Activated T-helper 2 cell treated with anti-CD3 and anti-CD28 coated beads, Interferon-gamma antibody, Interleukin-2, Interleukin-4, amounts not matched to agents 10 μg/mL and 5 μg/mL and 100 μg/mL, durations not matched to agents 14 hours and 24 hours and 36 hours (primary cell): ENCODE measurements at regions of chr19 and their contacts with region 1.

Region 1: DNA sequence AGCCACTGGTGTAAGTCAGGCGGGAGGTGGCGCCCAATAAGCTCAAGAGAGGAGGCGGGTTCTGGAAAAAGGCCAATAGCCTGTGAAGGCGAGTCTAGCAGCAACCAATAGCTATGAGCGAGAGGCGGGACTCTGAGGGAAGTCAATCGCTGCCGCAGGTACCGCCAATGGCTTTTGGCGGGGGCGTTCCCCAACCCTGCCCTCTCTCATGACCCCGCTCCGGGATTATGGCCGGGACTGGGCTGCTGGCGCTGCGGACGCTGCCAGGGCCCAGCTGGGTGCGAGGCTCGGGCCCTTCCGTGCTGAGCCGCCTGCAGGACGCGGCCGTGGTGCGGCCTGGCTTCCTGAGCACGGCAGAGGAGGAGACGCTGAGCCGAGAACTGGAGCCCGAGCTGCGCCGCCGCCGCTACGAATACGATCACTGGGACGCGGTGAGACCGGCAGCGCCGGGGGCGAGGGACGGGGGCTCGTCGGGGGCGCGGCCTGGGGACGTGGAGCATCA is at the start of gene ALKBH7:
- DNase-seq: peak; percentile 95
- H3K4me3 Mint-ChIP-seq: peak within 1 kb of the TSS; percentile 87
- H3K27ac Mint-ChIP-seq: peak within 1 kb of the TSS; percentile 88
- H3K4me1 Mint-ChIP-seq: peaks cover 8% of the 10 kb centered on the region
- H3K27me3 Mint-ChIP-seq: no peaks in the 10 kb centered on the region
- total RNA-seq, gene ALKBH7: 33.0 and 35.9 TPM in 2 replicates

Region 2: DNA sequence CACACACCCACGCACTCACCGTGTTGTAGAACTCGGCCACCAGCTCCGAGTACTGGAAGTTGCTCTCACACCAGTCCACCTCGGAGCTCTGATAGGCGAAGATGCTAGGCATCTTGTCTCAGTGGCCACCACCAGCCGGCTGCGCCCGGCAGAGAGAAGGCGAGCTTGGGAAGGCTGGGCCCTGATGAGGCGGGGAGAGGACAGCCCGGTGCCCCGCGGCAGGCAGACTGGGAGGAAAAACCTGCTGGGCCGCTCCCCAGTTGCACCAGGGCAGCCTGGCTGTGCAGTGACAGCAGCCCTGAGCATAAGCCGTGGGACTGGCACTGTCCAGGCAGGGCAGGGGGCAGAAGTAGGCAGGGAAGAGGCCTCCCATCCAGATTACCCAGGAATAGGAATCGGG is 39.2 kb before region 1 on chr19 and contains the start of gene ACER1:
- intact Hi-C with region 1: no loop called
- DNase-seq: no peak
- H3K4me3 Mint-ChIP-seq: no peak within 1 kb of the TSS
- H3K27ac Mint-ChIP-seq: no peak within 1 kb of the TSS
- H3K4me1 Mint-ChIP-seq: no peaks in the 10 kb centered on the region
- H3K27me3 Mint-ChIP-seq: no peaks in the 10 kb centered on the region
- total RNA-seq, gene ACER1: 0.11 TPM in 2 replicates

Region 3: DNA sequence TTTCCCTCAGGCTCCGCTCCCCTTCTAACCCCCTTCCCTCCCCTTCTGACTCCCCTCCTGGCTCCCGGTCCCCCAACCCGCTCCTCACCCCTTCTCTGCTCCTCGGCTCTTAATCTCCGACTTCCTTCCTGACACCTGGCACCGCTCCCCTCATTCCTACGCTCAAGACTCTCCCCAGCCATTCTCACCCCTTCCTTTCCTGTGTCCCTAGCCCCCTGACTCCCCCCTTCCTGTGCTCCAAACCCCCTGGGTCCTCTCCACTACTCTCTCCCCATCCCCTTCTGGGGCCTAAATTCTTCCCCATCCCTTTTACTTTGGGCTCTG is 10.7 kb before region 1 on chr19:
- intact Hi-C with region 1: loop called (anchors 1 kb)
- DNase-seq: no peak
- H3K4me3 Mint-ChIP-seq: peak overlapping the region; percentile 98
- H3K27ac Mint-ChIP-seq: peak overlapping the region; percentile 98
- H3K4me1 Mint-ChIP-seq: peaks cover 11% of the 10 kb centered on the region
- H3K27me3 Mint-ChIP-seq: no peaks in the 10 kb centered on the region

Region 4: GRCh38 chr19:6393074-6393983 is 20.7 kb after region 1 on chr19 and contains the start of gene GTF2F1:
- intact Hi-C with region 1: loop called (anchors 1 kb)
- DNase-seq: peak; percentile 87
- H3K4me3 Mint-ChIP-seq: peak within 1 kb of the TSS; percentile 88
- H3K27ac Mint-ChIP-seq: peak within 1 kb of the TSS; percentile 95
- H3K4me1 Mint-ChIP-seq: peaks cover 22% of the 10 kb centered on the region
- H3K27me3 Mint-ChIP-seq: no peaks in the 10 kb centered on the region
- total RNA-seq, gene GTF2F1: 59.6 and 60.1 TPM in 2 replicates

Region 5: DNA sequence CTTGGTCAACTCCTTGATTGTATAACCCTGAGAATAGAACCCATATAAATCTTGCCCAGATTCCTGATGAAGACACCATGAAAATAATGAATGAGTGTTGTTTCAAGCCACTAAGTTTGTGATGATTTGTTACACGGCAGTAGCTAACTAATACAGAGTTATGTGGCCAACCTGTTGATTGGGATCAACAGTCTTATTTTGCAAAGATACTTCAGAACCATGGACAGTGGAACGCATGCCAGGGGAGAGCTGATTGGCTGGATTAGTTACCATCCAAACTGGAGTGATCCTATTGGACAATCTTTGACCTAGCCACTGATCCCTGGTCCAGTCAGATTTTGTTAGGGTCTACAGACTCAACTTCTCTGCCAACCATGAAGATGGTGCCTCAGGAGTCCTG is 191.7 kb after region 1 on chr19:
- intact Hi-C with region 1: no loop called
- DNase-seq: no peak
- H3K4me3 Mint-ChIP-seq: no peak overlapping the region
- H3K27ac Mint-ChIP-seq: no peak overlapping the region
- H3K4me1 Mint-ChIP-seq: peaks cover 2% of the 10 kb centered on the region
- H3K27me3 Mint-ChIP-seq: peaks cover 23% of the 10 kb centered on the region